ENCODE measurements at regions of chr12 and their contacts with region 1.

Region 1: DNA sequence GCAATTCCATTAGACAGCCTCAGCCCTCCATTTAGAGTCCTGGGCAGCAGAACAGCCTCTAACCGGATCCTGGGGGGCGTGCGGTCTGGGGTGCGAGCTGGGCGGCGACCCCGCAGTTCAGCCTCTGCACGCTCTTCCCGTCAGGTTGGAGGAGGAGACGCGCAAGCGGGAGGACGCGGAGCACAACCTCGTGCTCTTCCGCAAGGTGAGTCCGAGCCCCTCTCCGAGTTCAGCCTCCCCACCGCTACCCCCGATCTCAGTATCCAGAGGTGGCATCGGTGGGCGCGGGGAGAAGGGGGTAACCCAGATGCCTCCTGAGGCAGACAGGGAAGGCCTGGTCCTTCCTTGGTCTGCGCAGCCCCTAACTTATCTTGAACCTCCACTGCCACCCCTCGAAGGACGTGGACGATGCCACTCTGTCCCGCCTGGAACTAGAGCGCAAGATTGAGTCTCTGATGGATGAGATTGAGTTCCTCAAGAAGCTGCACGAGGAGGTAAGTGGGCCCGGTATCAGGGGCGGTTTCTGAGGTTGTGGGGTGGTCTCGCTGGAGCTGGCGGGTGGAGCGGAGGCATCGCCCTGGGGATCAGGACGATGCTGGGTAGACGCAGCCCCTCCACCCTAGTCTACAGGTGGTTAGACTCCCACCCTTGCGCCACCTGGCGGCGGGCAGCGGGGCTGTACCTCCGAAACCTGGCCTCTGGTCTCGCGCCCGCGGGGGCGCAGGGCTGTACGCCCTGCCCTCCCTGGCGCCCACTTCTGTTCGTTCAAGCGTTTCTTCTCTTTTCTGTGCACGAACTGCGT is 1.3 kb downstream of the PRPH start:
- DNase-seq: no peak
- ATAC-seq: peak; percentile 64
- H3K4me3 ChIP-seq: peak overlapping the region; percentile 47 to 65
- H3K27ac ChIP-seq: no peak overlapping the region
- H3K4me1 ChIP-seq: peaks cover 10% of the 10 kb centered on the region
- H3K27me3 ChIP-seq: no peaks in the 10 kb centered on the region
- CTCF ChIP-seq: peak; percentile 94

Region 2: DNA sequence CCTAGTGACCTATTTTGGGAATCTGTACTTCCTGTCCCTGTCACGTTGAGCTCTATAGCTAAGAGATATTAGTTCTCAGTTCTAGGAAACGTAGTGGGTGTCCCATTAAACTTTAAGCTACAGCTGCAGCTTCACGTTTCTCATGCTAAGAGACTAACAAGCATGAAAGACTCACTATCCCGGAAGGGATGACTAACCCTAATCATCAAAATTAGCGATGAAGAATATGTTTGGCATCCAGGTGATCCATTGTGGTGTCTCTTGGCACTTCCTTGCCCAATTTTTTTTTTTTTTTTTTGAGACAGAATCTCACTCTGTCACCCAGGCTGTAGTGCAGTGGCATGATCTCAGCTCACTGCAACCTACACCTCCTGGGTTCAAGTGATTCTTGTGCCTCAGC is 715.4 kb before region 1 on chr12:
- CTCF ChIA-PET with region 1: no interaction called
- POLR2A ChIA-PET with region 1: no interaction called
- in situ Hi-C with region 1: no loop called
- intact Hi-C with region 1: no loop called
- DNase-seq: no peak
- ATAC-seq: no peak
- H3K4me3 ChIP-seq: no peak overlapping the region
- H3K27ac ChIP-seq: no peak overlapping the region
- H3K4me1 ChIP-seq: no peaks in the 10 kb centered on the region
- H3K27me3 ChIP-seq: peaks cover 5% of the 10 kb centered on the region; the same call in 1 of the 2 replicates
- CTCF ChIP-seq: no peak

Region 3: GRCh38 chr12:48851883-48852733 is 444.1 kb before region 1 on chr12 and contains the start of gene DDX23:
- CTCF ChIA-PET with region 1: no interaction called
- POLR2A ChIA-PET with region 1: no interaction called
- in situ Hi-C with region 1: no loop called
- intact Hi-C with region 1: no loop called
- DNase-seq: peak; percentile 88
- ATAC-seq: peak; percentile 99
- H3K4me3 ChIP-seq: peak within 1 kb of the TSS; percentile 96 to 98
- H3K27ac ChIP-seq: peak within 1 kb of the TSS; percentile 97
- H3K4me1 ChIP-seq: peaks cover 14% of the 10 kb centered on the region
- H3K27me3 ChIP-seq: no peaks in the 10 kb centered on the region
- CTCF ChIP-seq: no peak
- total RNA-seq, gene DDX23: 130 TPM

Region 4: DNA sequence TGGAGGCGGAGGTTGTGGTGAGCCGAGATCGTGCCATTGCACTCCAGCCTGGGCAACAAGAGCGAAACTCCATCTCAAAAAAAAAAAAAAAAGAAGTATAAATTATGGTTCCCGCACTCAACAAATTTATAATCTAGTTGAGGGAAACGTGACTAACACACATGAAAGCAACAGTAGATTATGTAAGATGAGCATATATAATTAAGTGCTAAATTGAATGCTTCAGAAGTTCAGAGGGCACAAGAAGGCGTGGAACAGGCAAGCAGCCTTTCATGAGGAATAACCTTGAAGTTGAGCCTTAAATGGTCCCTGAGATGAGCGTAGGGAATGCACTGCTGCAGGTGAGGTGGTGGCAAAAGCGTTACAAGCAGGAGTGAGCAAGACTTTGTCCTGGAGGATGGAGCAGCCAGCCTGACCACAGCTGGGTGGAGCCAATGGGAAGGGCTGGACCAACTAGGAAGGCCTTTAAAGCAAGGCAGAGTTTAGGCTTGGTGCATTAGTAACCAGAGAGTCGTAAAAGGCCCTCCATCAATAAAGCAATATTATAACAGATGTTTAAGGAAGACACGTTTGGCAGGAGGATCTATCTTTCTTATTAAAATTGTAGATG is 76.7 kb before region 1 on chr12:
- CTCF ChIA-PET with region 1: no interaction called
- POLR2A ChIA-PET with region 1: no interaction called
- in situ Hi-C with region 1: no loop called
- intact Hi-C with region 1: no loop called
- DNase-seq: no peak
- ATAC-seq: no peak
- H3K4me3 ChIP-seq: no peak overlapping the region
- H3K27ac ChIP-seq: no peak overlapping the region
- H3K4me1 ChIP-seq: no peaks in the 10 kb centered on the region; the same call in 1 of the 2 replicates
- H3K27me3 ChIP-seq: no peaks in the 10 kb centered on the region
- CTCF ChIP-seq: no peak

Region 5: GRCh38 chr12:49244176-49244575 is 52.1 kb before region 1 on chr12:
- CTCF ChIA-PET with region 1: no interaction called
- POLR2A ChIA-PET with region 1: interaction called, 13 read pairs
- in situ Hi-C with region 1: no loop called
- intact Hi-C with region 1: no loop called
- DNase-seq: no peak
- ATAC-seq: no peak
- H3K4me3 ChIP-seq: no peak overlapping the region
- H3K27ac ChIP-seq: no peak overlapping the region
- H3K4me1 ChIP-seq: no peaks in the 10 kb centered on the region
- H3K27me3 ChIP-seq: no peaks in the 10 kb centered on the region
- CTCF ChIP-seq: no peak

Region 6: GRCh38 chr12:49515266-49515665 is 219.0 kb after region 1 on chr12:
- CTCF ChIA-PET with region 1: interaction called, 11 read pairs
- POLR2A ChIA-PET with region 1: no interaction called
- in situ Hi-C with region 1: no loop called
- intact Hi-C with region 1: no loop called
- DNase-seq: peak; percentile 17
- ATAC-seq: no peak
- H3K4me3 ChIP-seq: no peak overlapping the region
- H3K27ac ChIP-seq: no peak overlapping the region
- H3K4me1 ChIP-seq: no peaks in the 10 kb centered on the region
- H3K27me3 ChIP-seq: no peaks in the 10 kb centered on the region
- CTCF ChIP-seq: no peak